Activated CD4-positive, alpha-beta memory T cell treated with anti-CD3 and anti-CD28 coated beads for 36 hours (primary cell): ENCODE measurements at regions of chr13 and their contacts with region 1.

Region 1: GRCh38 chr13:34941835-34942731 is at the start of gene NBEA:
- DNase-seq: peak; percentile 73
- H3K4me3 Mint-ChIP-seq: peak within 1 kb of the TSS; percentile 79
- H3K27ac Mint-ChIP-seq: no peak within 1 kb of the TSS
- H3K4me1 Mint-ChIP-seq: peaks cover 16% of the 10 kb centered on the region
- H3K27me3 Mint-ChIP-seq: peaks cover 31% of the 10 kb centered on the region
- total RNA-seq, gene NBEA: 0.26 to 0.29 TPM

Region 2: GRCh38 chr13:34156841-34157365 is 785.2 kb before region 1 on chr13:
- CTCF ChIA-PET with region 1: no interaction called
- POLR2A ChIA-PET with region 1: no interaction called
- intact Hi-C with region 1: loop called (anchors 5 kb)
- DNase-seq: peak; percentile 74
- H3K4me3 Mint-ChIP-seq: peak overlapping the region; percentile 28
- H3K27ac Mint-ChIP-seq: peak overlapping the region; percentile 10
- H3K4me1 Mint-ChIP-seq: peaks cover 14% of the 10 kb centered on the region
- H3K27me3 Mint-ChIP-seq: peaks cover 10% of the 10 kb centered on the region

Region 3: DNA sequence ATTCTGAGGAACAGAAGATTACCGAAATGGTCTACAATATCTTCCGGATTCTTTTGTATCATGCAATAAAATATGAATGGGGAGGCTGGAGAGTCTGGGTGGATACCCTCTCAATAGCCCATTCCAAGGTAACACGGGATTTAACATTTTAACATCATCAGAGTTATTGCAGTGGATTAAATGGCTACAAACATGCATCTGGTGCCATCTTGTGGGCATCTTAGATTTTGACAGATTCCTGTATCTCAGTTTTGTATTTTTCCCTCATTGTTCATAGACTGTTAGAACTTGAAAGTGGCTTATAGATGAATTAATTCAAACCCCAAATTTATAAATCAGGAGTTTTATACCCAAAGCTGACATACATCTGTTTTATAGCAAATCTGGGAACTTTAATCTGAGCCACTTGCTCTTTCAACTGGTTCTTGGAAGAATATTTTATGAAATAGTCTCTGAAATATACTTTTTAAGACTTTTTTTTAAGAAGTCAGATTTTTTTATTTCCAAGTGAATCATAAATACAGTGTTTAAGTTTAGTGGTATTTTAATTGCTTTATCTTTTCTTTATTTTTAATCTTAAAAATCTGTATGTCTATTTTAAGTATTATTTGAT is 215.2 kb after region 1 on chr13:
- CTCF ChIA-PET with region 1: no interaction called
- POLR2A ChIA-PET with region 1: no interaction called
- intact Hi-C with region 1: loop called (anchors 2 kb)
- DNase-seq: peak; percentile 16
- H3K4me3 Mint-ChIP-seq: no peak overlapping the region
- H3K27ac Mint-ChIP-seq: no peak overlapping the region
- H3K4me1 Mint-ChIP-seq: peaks cover under 1% of the 10 kb centered on the region
- H3K27me3 Mint-ChIP-seq: no peaks in the 10 kb centered on the region

Region 4: DNA sequence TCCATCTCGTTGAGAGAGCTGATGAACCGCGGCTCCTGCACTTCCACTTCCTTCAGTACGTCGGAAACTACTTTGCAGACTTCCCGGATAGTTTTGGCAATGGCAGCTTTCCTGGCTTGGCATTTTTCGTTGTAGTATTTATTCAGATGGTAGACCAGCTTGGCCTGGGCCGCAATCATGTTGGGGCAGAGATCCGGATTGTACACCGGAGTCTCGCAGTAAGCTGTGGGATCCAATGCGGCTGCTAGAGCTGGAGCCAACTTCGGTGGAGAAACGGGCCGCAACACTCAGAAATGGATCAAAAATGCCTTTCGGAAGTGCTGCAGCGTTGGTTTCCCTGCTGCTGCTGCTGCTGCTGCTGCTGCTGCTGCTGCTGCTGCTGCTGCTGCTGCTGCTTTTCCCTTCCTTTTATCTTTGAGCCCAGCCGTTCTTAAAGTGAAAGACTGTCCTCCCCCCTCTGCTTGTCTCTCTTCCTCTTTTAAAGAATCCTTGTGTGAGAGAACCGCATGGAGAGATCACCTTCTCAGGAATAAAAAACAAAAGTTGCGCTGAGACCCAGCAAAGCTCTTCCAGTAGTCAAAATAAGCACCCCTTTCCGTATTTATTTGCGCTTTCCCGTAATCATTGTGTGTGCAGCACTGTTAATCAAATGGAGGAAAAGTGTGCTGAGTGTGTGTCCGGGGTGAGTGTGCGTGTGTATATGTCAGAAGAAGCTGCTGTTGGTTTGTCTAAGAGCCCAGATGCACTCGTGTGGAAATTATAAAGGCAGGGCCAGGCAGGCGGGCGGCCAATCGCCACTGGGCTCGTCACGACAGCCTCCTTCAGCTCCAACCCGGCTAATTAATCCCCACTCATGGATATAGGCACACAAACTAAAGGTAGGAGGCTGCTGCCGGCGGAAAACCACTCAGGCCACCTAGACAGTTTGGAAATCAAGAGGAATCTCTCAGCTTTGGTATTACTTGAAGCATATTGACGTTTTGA is 534.2 kb after region 1 on chr13 and contains the start of gene MAB21L1:
- CTCF ChIA-PET with region 1: no interaction called
- POLR2A ChIA-PET with region 1: no interaction called
- intact Hi-C with region 1: loop called (anchors 10 kb)
- DNase-seq: no peak
- H3K4me3 Mint-ChIP-seq: peak within 1 kb of the TSS; percentile 65
- H3K27ac Mint-ChIP-seq: no peak within 1 kb of the TSS
- H3K4me1 Mint-ChIP-seq: peaks cover 20% of the 10 kb centered on the region
- H3K27me3 Mint-ChIP-seq: peaks cover 62% of the 10 kb centered on the region
- total RNA-seq, gene MAB21L1: not detected